ENCODE measurements at regions of chrX and their contacts with region 1.

Region 1: DNA sequence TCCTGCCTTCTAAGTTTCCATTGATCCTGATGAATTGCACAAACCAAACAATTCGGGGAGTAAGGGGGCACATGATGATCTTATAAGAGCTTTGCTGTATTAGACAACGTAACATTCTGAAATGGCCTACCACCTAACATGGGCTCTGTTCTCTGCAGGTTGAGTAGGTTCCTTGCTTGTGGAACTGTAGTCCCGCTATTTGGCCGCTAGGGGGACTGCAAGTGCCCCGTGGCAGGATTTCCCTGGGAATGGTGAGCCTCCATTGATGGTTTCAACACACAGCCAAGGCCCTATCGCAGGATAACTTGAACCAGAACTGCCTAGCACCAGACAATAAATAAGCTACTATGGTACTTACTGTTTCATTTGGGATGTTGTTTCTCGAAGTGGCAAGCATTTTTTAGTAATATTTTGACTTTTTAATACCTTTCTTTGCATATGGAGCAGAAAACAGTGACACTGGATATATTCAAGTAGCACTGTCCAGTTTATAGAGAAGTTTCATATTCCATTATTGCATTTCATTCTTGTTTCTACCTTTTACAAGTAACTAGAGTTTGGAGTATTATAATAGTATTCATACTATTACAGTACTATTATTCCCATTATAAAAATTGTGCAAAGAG is 11.9 kb downstream of the AR start:
- DNase-seq: no peak
- H3K4me3 ChIP-seq: no peak overlapping the region
- CTCF ChIP-seq: peak; percentile 75

Region 2: GRCh38 chrX:67624324-67624723 is 68.6 kb after region 1 on chrX:
- CTCF ChIA-PET with region 1: no interaction called
- POLR2A ChIA-PET with region 1: no interaction called
- DNase-seq: no peak
- H3K4me3 ChIP-seq: no peak overlapping the region
- CTCF ChIP-seq: no peak

Region 3: DNA sequence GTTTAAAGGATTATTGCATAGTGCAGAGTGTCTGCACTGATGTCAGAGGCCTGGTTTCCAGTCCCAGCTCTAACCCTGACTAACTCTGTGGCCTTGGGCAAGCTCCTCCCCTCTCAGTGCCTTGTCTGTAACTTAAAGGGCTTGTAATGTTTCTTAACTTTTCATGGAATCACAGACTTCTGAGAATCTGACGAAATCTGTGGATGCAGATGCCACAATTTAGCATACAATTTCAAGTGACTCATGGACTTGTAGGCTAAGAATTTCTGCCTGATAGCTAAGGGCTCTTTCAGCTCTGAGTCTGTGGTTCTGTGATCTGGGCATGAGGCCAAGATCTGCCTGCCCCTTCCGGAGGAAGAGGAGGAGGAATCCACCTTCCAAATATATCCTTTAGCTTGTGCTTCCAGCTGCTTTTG is 225.0 kb after region 1 on chrX:
- CTCF ChIA-PET with region 1: interaction called, 17 read pairs
- POLR2A ChIA-PET with region 1: no interaction called
- DNase-seq: peak; percentile 91
- H3K4me3 ChIP-seq: no peak overlapping the region
- CTCF ChIP-seq: no peak

Measured in AG04449 (cell line).